Dendritic cell treated with granulocyte-macrophage colony-stimulating factor and Interleukin-4, amounts not matched to agents 40 ng/mL and 50 ng/mL, for 4 days (primary cell): ENCODE measurements at regions of chr10 and their contacts with region 1.

Region 1: DNA sequence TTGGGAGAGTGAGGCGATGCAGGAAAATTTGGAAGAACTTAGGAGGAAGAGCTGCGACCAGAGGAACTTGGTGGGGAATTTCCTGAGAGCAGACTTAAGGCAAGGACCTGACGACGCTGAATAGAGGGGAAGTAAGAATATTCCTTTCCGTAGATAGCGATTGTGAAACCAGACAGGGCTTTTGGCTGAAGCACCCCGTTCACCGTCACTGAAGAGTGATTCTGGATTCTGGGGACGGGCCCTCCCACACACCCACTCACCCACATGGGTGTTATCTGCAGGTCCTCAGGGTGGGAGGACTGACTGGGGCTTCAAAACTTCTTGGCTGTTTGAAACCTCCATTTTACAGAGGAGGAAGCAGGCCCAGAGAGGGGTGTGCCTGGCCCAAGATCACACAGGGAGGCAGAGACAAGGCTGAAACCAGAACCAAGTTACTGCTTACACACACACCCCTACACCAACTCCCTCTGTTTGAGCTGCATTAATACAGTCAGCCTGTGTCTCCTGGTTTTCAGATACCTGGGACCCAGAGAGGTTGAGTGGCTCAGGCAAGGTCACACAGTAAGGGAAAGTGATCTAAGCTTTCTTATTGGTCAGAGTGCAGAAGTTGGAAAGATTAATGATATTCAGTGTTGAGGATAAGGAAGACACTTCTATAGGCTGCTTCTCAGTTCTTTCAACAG is 37.2 kb upstream of the CDH23 start:
- H3K4me3 Mint-ChIP-seq: peak overlapping the region; percentile 44
- H3K27ac Mint-ChIP-seq: peak overlapping the region; percentile 93
- H3K4me1 Mint-ChIP-seq: peaks cover 67% of the 10 kb centered on the region
- H3K27me3 Mint-ChIP-seq: no peaks in the 10 kb centered on the region

Region 2: GRCh38 chr10:71371750-71372166 is 12.3 kb after region 1 on chr10:
- intact Hi-C with region 1: loop called (anchors 2 kb)
- H3K4me3 Mint-ChIP-seq: no peak overlapping the region
- H3K27ac Mint-ChIP-seq: peak overlapping the region; percentile 91
- H3K4me1 Mint-ChIP-seq: peaks cover 90% of the 10 kb centered on the region
- H3K27me3 Mint-ChIP-seq: no peaks in the 10 kb centered on the region

Region 3: GRCh38 chr10:71378336-71379117 is 19.0 kb after region 1 on chr10:
- intact Hi-C with region 1: loop called (anchors 2 kb)
- H3K4me3 Mint-ChIP-seq: peak overlapping the region; percentile 17
- H3K27ac Mint-ChIP-seq: peak overlapping the region; percentile 91
- H3K4me1 Mint-ChIP-seq: peaks cover 77% of the 10 kb centered on the region
- H3K27me3 Mint-ChIP-seq: no peaks in the 10 kb centered on the region

Region 4: GRCh38 chr10:71409516-71410104 is 50.1 kb after region 1 on chr10:
- intact Hi-C with region 1: no loop called
- H3K4me3 Mint-ChIP-seq: no peak overlapping the region
- H3K27ac Mint-ChIP-seq: no peak overlapping the region
- H3K4me1 Mint-ChIP-seq: peaks cover 10% of the 10 kb centered on the region
- H3K27me3 Mint-ChIP-seq: peaks cover 23% of the 10 kb centered on the region

Region 5: DNA sequence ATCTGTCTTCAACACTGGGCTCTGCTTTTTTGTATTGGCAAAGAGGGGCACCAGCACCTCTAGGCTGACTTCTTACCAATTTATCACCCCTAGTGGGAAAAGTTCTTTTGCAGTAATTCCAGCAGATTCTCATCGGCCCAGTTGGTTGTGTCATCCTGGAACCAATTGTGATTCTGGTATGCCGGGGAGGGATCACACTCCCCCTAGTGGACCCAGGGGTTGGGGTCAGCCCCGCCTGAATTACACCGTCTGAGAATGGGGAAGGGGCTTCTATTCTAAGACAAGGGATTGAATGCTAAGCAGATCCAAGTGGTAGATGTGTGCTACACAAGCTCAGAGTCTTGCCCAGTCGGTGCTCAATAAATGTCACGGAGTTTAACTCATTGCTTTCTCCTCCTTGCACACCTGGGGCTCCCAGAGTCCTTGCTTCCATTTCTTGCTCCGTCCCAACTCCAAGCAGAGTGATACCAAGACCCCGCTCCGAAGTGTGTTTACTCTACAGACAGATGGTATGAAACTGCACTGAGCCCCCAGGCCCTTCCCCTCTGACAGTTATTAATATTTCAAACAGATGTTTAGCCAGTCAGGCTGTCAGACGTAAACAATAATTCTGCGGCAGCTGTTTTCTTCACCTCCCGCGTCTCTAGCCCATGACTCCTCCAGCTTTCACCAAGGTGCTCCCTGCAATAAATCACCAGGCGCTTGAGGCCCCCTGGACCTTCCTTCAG is 288.2 kb after region 1 on chr10:
- intact Hi-C with region 1: no loop called
- H3K4me3 Mint-ChIP-seq: no peak overlapping the region
- H3K27ac Mint-ChIP-seq: no peak overlapping the region
- H3K4me1 Mint-ChIP-seq: peaks cover 22% of the 10 kb centered on the region
- H3K27me3 Mint-ChIP-seq: peaks cover 5% of the 10 kb centered on the region